Activated CD4-positive, alpha-beta memory T cell treated with anti-CD3 and anti-CD28 coated beads, Interleukin-2, amount 10 ng/mL, durations not matched to agents 7 days and 5 days (primary cell): ENCODE measurements at regions of chr10 and their contacts with region 1.

Region 1: GRCh38 chr10:124916585-124917427 is 25.1 kb upstream of the ZRANB1 start:
- DNase-seq: peak; percentile 97
- H3K4me3 Mint-ChIP-seq: peak overlapping the region; percentile 87
- H3K27ac Mint-ChIP-seq: peak overlapping the region; percentile 80
- H3K4me1 Mint-ChIP-seq: peaks cover 31% of the 10 kb centered on the region
- H3K27me3 Mint-ChIP-seq: peaks cover 8% of the 10 kb centered on the region

Region 2: GRCh38 chr10:124802313-124802675 is 114.5 kb before region 1 on chr10:
- CTCF ChIA-PET with region 1: no interaction called
- POLR2A ChIA-PET with region 1: interaction called, 11 read pairs
- DNase-seq: no peak
- H3K4me3 Mint-ChIP-seq: peak overlapping the region; percentile 91
- H3K27ac Mint-ChIP-seq: peak overlapping the region; percentile 76
- H3K4me1 Mint-ChIP-seq: peaks cover 18% of the 10 kb centered on the region
- H3K27me3 Mint-ChIP-seq: peaks cover 7% of the 10 kb centered on the region

Region 3: GRCh38 chr10:124928087-124928486 is 11.3 kb after region 1 on chr10:
- CTCF ChIA-PET with region 1: interaction called, 3 read pairs
- POLR2A ChIA-PET with region 1: interaction called, 16 read pairs
- DNase-seq: no peak
- H3K4me3 Mint-ChIP-seq: no peak overlapping the region
- H3K27ac Mint-ChIP-seq: no peak overlapping the region
- H3K4me1 Mint-ChIP-seq: no peaks in the 10 kb centered on the region
- H3K27me3 Mint-ChIP-seq: no peaks in the 10 kb centered on the region

Region 4: GRCh38 chr10:125102231-125102630 is 185.4 kb after region 1 on chr10:
- CTCF ChIA-PET with region 1: no interaction called
- POLR2A ChIA-PET with region 1: no interaction called
- DNase-seq: no peak
- H3K4me3 Mint-ChIP-seq: no peak overlapping the region
- H3K27ac Mint-ChIP-seq: no peak overlapping the region
- H3K4me1 Mint-ChIP-seq: no peaks in the 10 kb centered on the region
- H3K27me3 Mint-ChIP-seq: peaks cover 2% of the 10 kb centered on the region